Calu3 (cell line): ENCODE measurements at regions of chr5 and their contacts with region 1.

Region 1: GRCh38 chr5:59034498-59035186 is 451.8 kb downstream of the RAB3C start:
- DNase-seq: no peak
- H3K4me3 Mint-ChIP-seq: no peak overlapping the region
- H3K27ac Mint-ChIP-seq: no peak overlapping the region
- H3K4me1 Mint-ChIP-seq: peaks cover 9% of the 10 kb centered on the region
- H3K27me3 Mint-ChIP-seq: no peaks in the 10 kb centered on the region
- CTCF ChIP-seq: no peak

Region 2: GRCh38 chr5:59126708-59127573 is 92.3 kb after region 1 on chr5:
- CTCF ChIA-PET with region 1: interaction called, 5 read pairs
- intact Hi-C with region 1: loop called (anchors 2 kb)
- DNase-seq: no peak
- H3K4me3 Mint-ChIP-seq: no peak overlapping the region
- H3K27ac Mint-ChIP-seq: no peak overlapping the region
- H3K4me1 Mint-ChIP-seq: no peaks in the 10 kb centered on the region
- H3K27me3 Mint-ChIP-seq: no peaks in the 10 kb centered on the region
- CTCF ChIP-seq: no peak

Region 3: GRCh38 chr5:59174248-59174844 is 139.7 kb after region 1 on chr5:
- CTCF ChIA-PET with region 1: interaction called, 5 read pairs
- intact Hi-C with region 1: loop called (anchors 1 kb)
- DNase-seq: peak; percentile 31
- H3K4me3 Mint-ChIP-seq: no peak overlapping the region
- H3K27ac Mint-ChIP-seq: no peak overlapping the region
- H3K4me1 Mint-ChIP-seq: no peaks in the 10 kb centered on the region
- H3K27me3 Mint-ChIP-seq: no peaks in the 10 kb centered on the region
- CTCF ChIP-seq: peak; percentile 62